ENCODE measurements at regions of chr2 and their contacts with region 1.

Region 1: GRCh38 chr2:62456721-62457539 is 49.1 kb downstream of the TMEM17 start:
- DNase-seq: peak; percentile 94
- ATAC-seq: peak; percentile 93
- H3K4me3 Mint-ChIP-seq: peak overlapping the region; percentile 68
- H3K27ac Mint-ChIP-seq: no peak overlapping the region
- H3K4me1 Mint-ChIP-seq: peaks cover 14% of the 10 kb centered on the region
- H3K27me3 Mint-ChIP-seq: peaks cover 31% of the 10 kb centered on the region
- CTCF ChIP-seq: peak; percentile 97

Region 2: GRCh38 chr2:62248221-62248620 is 208.7 kb before region 1 on chr2:
- CTCF ChIA-PET with region 1: no interaction called
- POLR2A ChIA-PET with region 1: no interaction called
- DNase-seq: no peak
- ATAC-seq: no peak
- H3K4me3 Mint-ChIP-seq: no peak overlapping the region
- H3K27ac Mint-ChIP-seq: no peak overlapping the region
- H3K4me1 Mint-ChIP-seq: no peaks in the 10 kb centered on the region
- H3K27me3 Mint-ChIP-seq: no peaks in the 10 kb centered on the region
- CTCF ChIP-seq: no peak

Region 3: GRCh38 chr2:62398356-62398755 is 58.6 kb before region 1 on chr2:
- CTCF ChIA-PET with region 1: no interaction called
- POLR2A ChIA-PET with region 1: no interaction called
- DNase-seq: no peak
- ATAC-seq: no peak
- H3K4me3 Mint-ChIP-seq: no peak overlapping the region
- H3K27ac Mint-ChIP-seq: no peak overlapping the region
- H3K4me1 Mint-ChIP-seq: peaks cover 11% of the 10 kb centered on the region
- H3K27me3 Mint-ChIP-seq: no peaks in the 10 kb centered on the region
- CTCF ChIP-seq: no peak

Region 4: DNA sequence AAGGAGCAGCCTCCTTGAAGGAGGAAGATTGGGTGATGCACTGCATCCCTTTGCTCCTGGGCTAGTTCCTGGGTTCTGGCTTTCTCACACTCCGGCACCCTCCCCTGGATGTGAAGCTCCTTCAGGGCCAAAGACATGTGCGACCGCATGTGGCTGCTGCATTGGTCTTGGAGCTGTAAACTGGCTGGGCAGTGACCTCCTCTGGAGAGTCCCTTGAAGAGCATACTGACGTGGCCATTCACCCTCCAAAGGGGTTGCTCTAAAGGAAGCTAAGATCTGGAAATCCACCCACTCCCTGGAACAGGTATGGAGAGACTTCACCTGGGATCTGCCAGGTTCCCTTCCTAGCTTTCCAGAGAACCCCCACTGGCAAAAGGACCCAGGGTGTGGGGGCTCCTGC is 13.0 kb before region 1 on chr2:
- CTCF ChIA-PET with region 1: interaction called, 16 read pairs
- POLR2A ChIA-PET with region 1: no interaction called
- DNase-seq: no peak
- ATAC-seq: peak; percentile 60
- H3K4me3 Mint-ChIP-seq: no peak overlapping the region
- H3K27ac Mint-ChIP-seq: no peak overlapping the region
- H3K4me1 Mint-ChIP-seq: no peaks in the 10 kb centered on the region
- H3K27me3 Mint-ChIP-seq: no peaks in the 10 kb centered on the region
- CTCF ChIP-seq: no peak

Region 5: DNA sequence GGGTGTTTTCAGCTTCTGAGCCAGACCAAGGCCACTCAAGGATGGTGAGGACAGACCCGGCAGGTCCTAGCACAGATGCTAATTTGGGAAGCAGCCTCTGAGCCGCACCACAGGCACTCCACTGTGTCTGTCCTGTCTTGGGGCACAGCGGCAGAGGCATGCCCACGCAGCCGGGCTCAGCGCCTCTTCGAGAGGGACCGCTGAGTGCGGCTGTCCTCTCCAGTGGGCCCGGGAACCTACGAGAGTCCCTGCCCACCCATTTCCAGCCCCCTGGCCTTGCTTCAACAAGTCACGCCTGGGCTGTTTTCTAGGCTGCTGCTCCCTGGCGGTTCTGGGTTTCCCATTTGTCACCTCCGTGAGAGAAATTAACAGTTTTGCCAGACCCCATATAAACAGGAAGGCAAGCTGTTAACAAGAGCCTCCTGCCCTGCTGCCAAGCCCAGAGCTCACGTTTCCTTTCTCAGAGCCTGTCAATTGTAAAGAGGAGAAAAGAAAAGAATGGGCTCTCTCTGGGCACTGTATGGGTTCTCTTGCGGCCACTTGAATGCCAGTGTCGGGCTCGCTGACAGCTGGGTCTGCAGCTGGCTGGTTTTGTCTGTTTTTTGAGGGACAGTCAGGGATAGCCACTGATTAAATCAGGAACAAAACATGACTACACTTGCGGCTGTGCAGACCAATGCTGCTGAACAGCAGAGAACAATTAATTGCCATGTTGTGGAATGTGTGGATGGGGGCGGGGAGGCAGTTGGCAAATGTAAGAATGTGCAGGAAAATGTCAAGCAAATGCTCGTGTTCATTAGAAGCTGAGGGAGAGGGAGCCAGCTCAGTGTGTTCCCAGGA is 18.5 kb after region 1 on chr2:
- CTCF ChIA-PET with region 1: interaction called, 25 read pairs
- POLR2A ChIA-PET with region 1: no interaction called
- DNase-seq: no peak
- ATAC-seq: peak; percentile 36
- H3K4me3 Mint-ChIP-seq: no peak overlapping the region
- H3K27ac Mint-ChIP-seq: no peak overlapping the region
- H3K4me1 Mint-ChIP-seq: peaks cover 37% of the 10 kb centered on the region
- H3K27me3 Mint-ChIP-seq: no peaks in the 10 kb centered on the region
- CTCF ChIP-seq: no peak

Region 6: GRCh38 chr2:62526531-62527381 is 69.8 kb after region 1 on chr2:
- CTCF ChIA-PET with region 1: interaction called, 12 read pairs
- POLR2A ChIA-PET with region 1: no interaction called
- DNase-seq: no peak
- ATAC-seq: peak; percentile 82
- H3K4me3 Mint-ChIP-seq: no peak overlapping the region
- H3K27ac Mint-ChIP-seq: peak overlapping the region; percentile 93
- H3K4me1 Mint-ChIP-seq: peaks cover 34% of the 10 kb centered on the region
- H3K27me3 Mint-ChIP-seq: no peaks in the 10 kb centered on the region
- CTCF ChIP-seq: no peak

Region 7: DNA sequence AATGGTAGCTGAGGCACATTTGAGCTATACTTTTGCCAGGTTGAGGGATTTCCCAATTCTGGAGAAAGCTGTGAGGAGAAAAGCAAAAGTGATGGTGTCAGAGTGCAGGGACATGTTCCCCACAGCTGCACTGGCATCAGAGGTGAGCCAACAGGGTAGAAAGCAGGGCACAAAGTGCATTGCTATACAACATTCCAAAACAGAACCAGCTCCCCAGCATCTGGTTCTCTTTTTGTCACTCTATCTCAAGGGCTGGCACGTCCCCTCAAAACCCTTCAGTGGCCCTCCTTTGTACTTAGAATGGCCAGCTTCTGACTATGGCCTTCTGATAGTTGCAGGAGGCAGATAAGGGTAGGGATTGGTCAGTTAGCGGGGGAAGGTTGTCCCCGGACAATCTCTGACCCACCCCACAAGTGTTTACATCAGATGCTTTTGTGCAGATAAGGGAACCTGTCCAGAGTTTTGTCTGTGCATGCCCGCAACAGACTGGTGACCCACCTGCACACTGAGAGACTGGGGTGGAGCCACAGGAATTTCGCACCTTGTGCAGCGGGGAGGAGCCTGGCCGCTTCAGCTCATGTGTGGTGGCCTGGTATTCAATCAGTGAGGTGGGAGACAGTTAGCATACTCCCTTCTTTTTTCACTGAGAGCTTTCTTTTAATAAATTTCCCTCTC is 80.1 kb after region 1 on chr2:
- CTCF ChIA-PET with region 1: no interaction called
- POLR2A ChIA-PET with region 1: no interaction called
- DNase-seq: no peak
- ATAC-seq: no peak
- H3K4me3 Mint-ChIP-seq: no peak overlapping the region
- H3K27ac Mint-ChIP-seq: no peak overlapping the region
- H3K4me1 Mint-ChIP-seq: peaks cover 13% of the 10 kb centered on the region
- H3K27me3 Mint-ChIP-seq: no peaks in the 10 kb centered on the region; the same call in 1 of the 2 replicates
- CTCF ChIP-seq: no peak

Region 8: GRCh38 chr2:62705007-62705829 is 248.3 kb after region 1 on chr2 and contains the start of gene EHBP1:
- CTCF ChIA-PET with region 1: interaction called, 20 read pairs
- POLR2A ChIA-PET with region 1: no interaction called
- DNase-seq: peak; percentile 98
- ATAC-seq: peak; percentile 92
- H3K4me3 Mint-ChIP-seq: peak within 1 kb of the TSS; percentile 88
- H3K27ac Mint-ChIP-seq: peak within 1 kb of the TSS; percentile 96
- H3K4me1 Mint-ChIP-seq: peaks cover 28% of the 10 kb centered on the region
- H3K27me3 Mint-ChIP-seq: no peaks in the 10 kb centered on the region
- CTCF ChIP-seq: no peak
- total RNA-seq, gene EHBP1: 30.9 to 36.4 TPM (median 35.3 TPM) in 3 replicates

Region 9: DNA sequence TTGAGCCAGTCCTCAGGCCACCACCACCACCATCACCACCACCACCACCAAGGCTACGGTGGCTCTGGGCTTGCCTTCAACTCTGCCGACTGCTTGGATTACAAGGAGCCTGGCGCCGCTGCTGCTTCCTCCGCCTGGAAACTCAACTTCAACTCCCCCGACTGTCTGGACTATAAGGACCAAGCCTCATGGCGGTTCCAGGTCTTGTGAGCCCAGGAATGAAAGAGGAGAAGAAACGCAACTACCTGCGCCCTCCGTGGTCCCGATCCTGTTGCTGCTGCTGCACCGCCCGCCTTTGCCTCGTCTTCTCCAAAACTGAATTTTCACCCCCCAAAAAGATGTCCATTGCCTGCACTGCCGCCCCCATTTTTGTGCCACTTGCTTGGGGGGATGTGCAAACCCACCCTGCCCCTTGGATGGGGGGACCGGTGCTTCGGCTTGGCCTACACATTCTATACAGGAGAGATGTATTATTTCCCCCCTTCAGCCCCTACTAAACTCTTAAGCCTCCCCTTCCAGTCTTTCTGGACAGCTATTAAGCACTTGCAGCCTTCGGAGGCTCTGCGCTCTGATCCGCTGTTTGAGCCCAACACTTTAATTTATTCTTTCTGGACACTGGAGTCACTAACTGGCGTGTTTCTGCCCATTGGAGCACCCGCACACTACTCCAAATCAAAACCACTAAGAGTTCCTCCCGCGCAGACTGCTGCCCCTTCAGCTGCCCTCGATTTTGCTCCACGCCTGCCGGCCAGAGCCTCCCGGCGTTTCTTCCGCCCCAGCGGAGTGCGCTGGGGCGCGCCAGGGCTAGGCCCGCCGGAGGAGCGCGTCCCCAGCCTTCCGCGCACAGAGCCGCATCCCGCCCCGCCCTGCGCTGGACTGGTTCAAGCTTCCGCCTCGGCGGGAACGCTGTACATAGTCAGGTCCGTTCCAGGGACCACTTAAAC is 599.4 kb after region 1 on chr2:
- CTCF ChIA-PET with region 1: interaction called, 11 read pairs
- POLR2A ChIA-PET with region 1: no interaction called
- DNase-seq: peak; percentile 58
- ATAC-seq: peak; percentile 5
- H3K4me3 Mint-ChIP-seq: peak overlapping the region; percentile 75
- H3K27ac Mint-ChIP-seq: no peak overlapping the region
- H3K4me1 Mint-ChIP-seq: peaks cover 72% of the 10 kb centered on the region
- H3K27me3 Mint-ChIP-seq: peaks cover 100% of the 10 kb centered on the region
- CTCF ChIP-seq: no peak

Measured in WTC11 (cell line).